ENCODE measurements at regions of chr3 and their contacts with region 1.

Region 1: DNA sequence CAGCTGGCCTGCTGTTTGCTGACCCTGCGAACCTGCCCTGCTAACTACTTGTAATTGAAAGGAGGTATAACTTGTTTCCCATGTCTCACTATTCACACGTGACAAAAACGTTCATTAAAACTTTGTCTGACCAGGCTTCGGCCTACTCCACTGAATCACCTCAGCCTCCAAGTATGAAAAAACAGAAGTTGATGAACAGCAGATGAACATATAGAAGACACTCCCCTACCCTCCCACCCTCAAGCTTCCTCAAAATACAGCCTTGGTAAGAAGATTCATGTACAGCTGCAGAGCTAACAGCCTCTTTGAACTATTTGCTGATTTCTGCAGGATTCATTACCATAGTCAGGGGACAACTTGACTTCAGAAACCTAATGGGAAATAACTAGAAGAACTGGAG is 10.7 kb downstream of the RBM15B start:
- DNase-seq: no peak
- H3K4me3 ChIP-seq: no peak overlapping the region
- H3K27ac ChIP-seq: no peak overlapping the region
- H3K4me1 ChIP-seq: no peaks in the 10 kb centered on the region
- H3K27me3 ChIP-seq: no peaks in the 10 kb centered on the region
- CTCF ChIP-seq: no peak

Region 2: GRCh38 chr3:51269466-51269865 is 132.3 kb before region 1 on chr3:
- intact Hi-C with region 1: no loop called
- DNase-seq: no peak
- H3K4me3 ChIP-seq: no peak overlapping the region
- H3K27ac ChIP-seq: no peak overlapping the region
- H3K4me1 ChIP-seq: no peaks in the 10 kb centered on the region
- H3K27me3 ChIP-seq: no peaks in the 10 kb centered on the region
- CTCF ChIP-seq: no peak

Region 3: DNA sequence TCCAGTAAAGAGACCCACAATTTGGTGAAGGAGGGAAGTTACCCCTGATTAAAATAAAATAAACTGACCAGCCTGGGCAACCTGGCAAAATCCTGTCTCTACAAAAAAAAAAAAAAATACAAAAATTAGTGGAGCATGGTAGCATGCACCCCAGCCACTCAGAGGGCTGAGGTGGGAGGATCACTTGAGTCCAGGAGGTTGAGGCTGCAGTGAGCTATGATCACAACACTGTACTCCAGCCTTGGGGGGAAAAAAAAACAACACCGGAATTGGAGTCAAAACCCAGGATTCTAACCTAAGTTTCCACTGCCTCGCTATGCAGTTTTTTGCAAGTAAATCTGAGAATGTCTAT is 75.6 kb after region 1 on chr3:
- intact Hi-C with region 1: loop called (anchors 10 kb)
- DNase-seq: no peak
- H3K4me3 ChIP-seq: no peak overlapping the region
- H3K27ac ChIP-seq: no peak overlapping the region
- H3K4me1 ChIP-seq: no peaks in the 10 kb centered on the region
- H3K27me3 ChIP-seq: no peaks in the 10 kb centered on the region
- CTCF ChIP-seq: no peak